Upper lobe of right lung (tissue), 1 donor: ENCODE measurements at regions of chr6 and their contacts with region 1.

Region 1: DNA sequence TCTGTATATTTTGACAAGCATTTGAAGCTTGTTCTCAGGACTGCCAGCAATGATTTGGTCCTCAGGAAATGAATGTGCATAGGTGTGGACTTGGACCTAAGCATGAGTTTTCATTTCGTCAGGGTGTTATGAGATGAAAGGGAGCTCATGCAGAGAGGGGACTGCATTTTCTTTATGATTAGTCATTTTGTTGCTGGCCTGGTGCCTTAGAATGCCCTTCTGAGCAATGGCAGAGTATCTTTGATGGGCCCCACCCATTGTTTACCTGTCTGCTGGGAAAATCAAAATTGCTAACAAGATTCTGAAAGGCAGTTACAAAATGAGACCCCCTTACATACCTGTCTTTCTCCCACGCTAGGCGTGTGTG is 51.5 kb upstream of the MTHFD1L start:
- DNase-seq: no peak
- ATAC-seq: no peak
- H3K4me3 ChIP-seq: no peak overlapping the region
- H3K27ac ChIP-seq: no peak overlapping the region
- H3K4me1 ChIP-seq: peaks cover 9% of the 10 kb centered on the region
- H3K27me3 ChIP-seq: no peaks in the 10 kb centered on the region
- CTCF ChIP-seq: no peak

Region 2: GRCh38 chr6:150417899-150418826 is 395.8 kb before region 1 on chr6:
- intact Hi-C with region 1: loop called (anchors 2 kb)
- DNase-seq: no peak
- ATAC-seq: peak; percentile 89
- H3K4me3 ChIP-seq: peak overlapping the region; percentile 46
- H3K27ac ChIP-seq: peak overlapping the region; percentile 47
- H3K4me1 ChIP-seq: peaks cover 4% of the 10 kb centered on the region
- H3K27me3 ChIP-seq: no peaks in the 10 kb centered on the region
- CTCF ChIP-seq: peak; percentile 80